Mammary epithelial cell (primary cell): ENCODE measurements at regions of chr5 and their contacts with region 1.

Region 1: DNA sequence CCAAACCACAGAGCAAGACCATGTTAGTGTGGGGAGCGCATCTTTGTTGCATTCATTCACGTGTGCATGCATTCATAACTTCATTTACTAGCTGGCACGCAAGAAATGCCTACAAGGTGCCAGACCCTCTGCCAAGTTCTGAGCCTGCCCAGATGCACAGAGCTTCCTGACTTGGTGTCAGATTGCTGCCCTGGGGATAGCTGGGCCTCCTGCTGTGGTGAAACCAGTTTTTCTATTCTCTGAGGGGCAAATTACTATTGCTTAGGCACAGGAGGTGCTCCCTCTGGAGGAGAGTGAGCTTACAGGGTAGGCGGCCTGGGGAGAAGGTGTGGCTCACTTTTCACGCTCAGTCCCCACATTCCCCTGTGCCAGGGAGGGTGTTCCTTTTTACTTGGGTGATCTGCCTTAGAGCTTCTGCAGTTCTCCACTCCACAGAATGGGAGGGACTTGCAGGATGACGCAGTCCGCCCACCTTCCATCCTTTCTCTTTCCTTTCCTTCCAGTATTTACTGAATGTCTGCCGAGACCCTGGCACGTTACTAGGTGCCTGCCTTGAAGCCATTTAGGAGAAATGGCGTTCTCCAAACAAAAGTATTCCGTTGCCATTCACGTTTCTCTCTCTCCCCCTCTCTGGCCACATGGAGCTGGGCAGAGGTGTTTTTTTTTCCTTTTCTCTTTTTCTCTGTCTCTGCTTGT is 27.9 kb upstream of the CTNNA1 start:
- DNase-seq: peak; percentile 97
- H3K4me3 ChIP-seq: peak overlapping the region in 1 of 3 experiments; percentile 25
- H3K27ac ChIP-seq: peak overlapping the region; percentile 91
- H3K4me1 ChIP-seq: peaks cover 23% of the 10 kb centered on the region
- H3K27me3 ChIP-seq: no peaks in the 10 kb centered on the region
- CTCF ChIP-seq: peak; percentile 78 to 87

Region 2: GRCh38 chr5:138641547-138642298 is 83.6 kb before region 1 on chr5:
- CTCF ChIA-PET with region 1: no interaction called
- dilution Hi-C with region 1: loop called (anchors 5 kb)
- in situ Hi-C with region 1: no loop called
- intact Hi-C with region 1: loop called (anchors 2 kb)
- DNase-seq: peak; percentile 51
- H3K4me3 ChIP-seq: no peak overlapping the region
- H3K27ac ChIP-seq: no peak overlapping the region
- H3K4me1 ChIP-seq: peaks cover 5% of the 10 kb centered on the region
- H3K27me3 ChIP-seq: no peaks in the 10 kb centered on the region
- CTCF ChIP-seq: peak; percentile 77 to 79

Region 3: GRCh38 chr5:138649316-138649720 is 76.0 kb before region 1 on chr5:
- CTCF ChIA-PET with region 1: no interaction called
- dilution Hi-C with region 1: loop called (anchors 5 kb)
- in situ Hi-C with region 1: no loop called
- intact Hi-C with region 1: loop called (anchors 1 kb)
- DNase-seq: no peak
- H3K4me3 ChIP-seq: no peak overlapping the region
- H3K27ac ChIP-seq: no peak overlapping the region
- H3K4me1 ChIP-seq: peaks cover 8% of the 10 kb centered on the region
- H3K27me3 ChIP-seq: no peaks in the 10 kb centered on the region
- CTCF ChIP-seq: no peak

Region 4: DNA sequence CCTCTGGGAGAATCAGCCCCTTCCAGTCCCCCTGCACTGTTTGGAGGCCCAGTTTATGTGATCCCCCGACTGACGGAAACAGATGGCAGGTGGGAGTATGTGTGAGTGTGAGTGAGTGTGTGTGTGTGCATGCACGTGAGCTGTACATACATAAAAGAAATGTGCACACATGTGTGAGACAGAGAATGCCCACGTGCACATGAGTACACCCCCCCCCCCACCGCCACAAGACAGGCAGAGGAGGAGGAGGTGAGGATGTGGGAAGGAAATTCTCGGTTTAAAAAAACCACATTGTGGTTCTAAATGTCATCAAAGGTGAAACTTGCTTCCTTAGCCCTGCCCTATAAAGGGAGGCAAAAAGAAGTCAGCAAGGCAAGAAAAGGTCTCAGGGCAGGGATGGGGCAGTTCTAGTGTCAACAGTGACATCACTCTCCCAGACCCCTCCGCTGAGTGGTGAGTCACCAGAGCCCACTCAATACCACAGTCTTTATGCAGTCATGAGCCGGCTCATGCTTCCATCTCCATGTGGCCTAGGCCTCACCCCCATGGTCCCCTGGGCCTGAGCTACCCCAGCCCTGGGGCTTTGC is 70.9 kb before region 1 on chr5:
- CTCF ChIA-PET with region 1: no interaction called
- dilution Hi-C with region 1: loop called (anchors 5 kb)
- in situ Hi-C with region 1: no loop called
- intact Hi-C with region 1: loop called (anchors 1 kb)
- DNase-seq: peak; percentile 55
- H3K4me3 ChIP-seq: no peak overlapping the region
- H3K27ac ChIP-seq: no peak overlapping the region
- H3K4me1 ChIP-seq: peaks cover 13% of the 10 kb centered on the region
- H3K27me3 ChIP-seq: no peaks in the 10 kb centered on the region
- CTCF ChIP-seq: no peak

Region 5: DNA sequence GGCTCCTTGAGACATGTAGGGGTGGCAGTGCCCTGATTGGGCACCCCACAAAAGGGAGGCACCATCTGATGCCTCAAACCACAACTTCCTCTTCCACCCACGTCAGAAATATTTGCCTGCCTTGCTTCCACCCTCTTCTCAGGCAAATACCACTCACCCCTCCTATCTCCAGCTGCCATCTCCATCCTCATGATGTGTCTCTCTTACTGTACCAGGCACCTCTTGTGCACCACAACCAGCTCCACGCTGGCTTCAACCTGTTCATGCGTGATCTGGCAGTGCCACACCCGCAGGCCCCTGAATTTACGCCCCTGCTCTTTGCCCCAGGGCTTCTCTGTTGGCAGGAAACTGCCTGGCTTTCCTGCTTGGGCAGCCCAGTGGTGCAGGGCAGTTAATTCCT is 62.3 kb before region 1 on chr5:
- CTCF ChIA-PET with region 1: no interaction called
- dilution Hi-C with region 1: no loop called
- in situ Hi-C with region 1: no loop called
- intact Hi-C with region 1: loop called (anchors 2 kb)
- DNase-seq: peak; percentile 37
- H3K4me3 ChIP-seq: no peak overlapping the region
- H3K27ac ChIP-seq: no peak overlapping the region
- H3K4me1 ChIP-seq: peaks cover 19% of the 10 kb centered on the region
- H3K27me3 ChIP-seq: no peaks in the 10 kb centered on the region
- CTCF ChIP-seq: no peak

Region 6: DNA sequence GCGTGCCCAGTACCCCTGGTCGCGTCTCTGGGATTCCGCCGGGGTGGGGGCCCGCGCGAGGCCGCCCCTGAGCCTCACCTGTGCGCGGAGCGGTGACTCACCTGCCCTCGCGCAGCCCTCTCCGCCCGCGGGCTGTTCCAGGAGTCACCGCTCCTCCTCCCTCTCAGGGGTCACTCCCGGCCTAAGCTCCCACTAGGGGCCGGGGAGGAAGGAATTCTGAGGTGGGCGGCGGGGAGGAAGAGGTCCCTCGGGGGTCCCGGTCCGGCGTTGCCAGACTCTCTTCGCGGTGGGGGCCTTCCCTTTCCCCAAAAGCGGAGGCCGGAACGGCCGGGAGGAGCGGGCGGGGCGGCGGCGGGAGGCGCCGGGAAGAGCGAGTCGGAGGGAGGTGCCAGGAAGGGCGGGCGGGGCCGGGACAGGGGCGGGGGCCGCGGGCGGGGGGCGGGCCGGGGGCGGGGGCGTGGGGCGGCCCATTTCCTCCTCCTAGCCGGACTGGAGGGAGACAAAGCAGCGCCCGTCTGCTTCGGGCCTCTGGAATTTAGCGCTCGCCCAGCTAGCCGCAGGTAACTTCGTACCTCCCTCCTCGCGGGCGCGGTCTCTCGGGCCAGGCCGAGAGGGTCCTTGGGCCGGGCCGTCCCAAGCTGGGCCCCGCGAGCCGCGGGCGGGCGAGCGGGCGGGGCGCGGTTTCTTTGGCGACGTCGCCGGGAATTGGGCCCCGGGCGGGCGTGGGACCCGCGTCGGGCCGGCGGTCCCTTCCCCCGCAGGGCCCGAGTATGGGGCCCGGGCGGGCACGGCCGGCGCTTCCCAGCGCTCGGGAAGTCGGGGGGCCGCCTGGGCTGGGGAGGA is 27.9 kb after region 1 on chr5 and contains the start of gene CTNNA1:
- CTCF ChIA-PET with region 1: no interaction called
- dilution Hi-C with region 1: no loop called
- in situ Hi-C with region 1: no loop called
- intact Hi-C with region 1: loop called (anchors 1 kb)
- DNase-seq: peak; percentile 83
- H3K4me3 ChIP-seq: peak within 1 kb of the TSS; percentile 88 to 99 (median 94)
- H3K27ac ChIP-seq: peak within 1 kb of the TSS; percentile 94
- H3K4me1 ChIP-seq: peaks cover 11% of the 10 kb centered on the region
- H3K27me3 ChIP-seq: no peaks in the 10 kb centered on the region
- CTCF ChIP-seq: no peak
- total RNA-seq, gene CTNNA1: 348 to 366 TPM

Region 7: GRCh38 chr5:138760448-138761110 is 35.3 kb after region 1 on chr5:
- CTCF ChIA-PET with region 1: interaction called, 18 read pairs
- dilution Hi-C with region 1: no loop called
- in situ Hi-C with region 1: no loop called
- intact Hi-C with region 1: no loop called
- DNase-seq: no peak
- H3K4me3 ChIP-seq: no peak overlapping the region
- H3K27ac ChIP-seq: no peak overlapping the region
- H3K4me1 ChIP-seq: peaks cover 5% of the 10 kb centered on the region
- H3K27me3 ChIP-seq: no peaks in the 10 kb centered on the region
- CTCF ChIP-seq: no peak